IMR-90 (cell line): ENCODE measurements at regions of chr14 and their contacts with region 1.

Region 1: GRCh38 chr14:80055667-80056496 is 155.4 kb downstream of the DIO2 start:
- DNase-seq: peak; percentile 78
- ATAC-seq: peak; percentile 80
- H3K4me3 ChIP-seq: no peak overlapping the region
- H3K27ac ChIP-seq: no peak overlapping the region
- H3K4me1 ChIP-seq: no peaks in the 10 kb centered on the region; the same call in 1 of the 2 replicates
- H3K27me3 ChIP-seq: no peaks in the 10 kb centered on the region
- CTCF ChIP-seq: peak; percentile 87
- POLR2A ChIP-seq: no peak
- RAD21 ChIP-seq: peak; percentile 94

Region 2: DNA sequence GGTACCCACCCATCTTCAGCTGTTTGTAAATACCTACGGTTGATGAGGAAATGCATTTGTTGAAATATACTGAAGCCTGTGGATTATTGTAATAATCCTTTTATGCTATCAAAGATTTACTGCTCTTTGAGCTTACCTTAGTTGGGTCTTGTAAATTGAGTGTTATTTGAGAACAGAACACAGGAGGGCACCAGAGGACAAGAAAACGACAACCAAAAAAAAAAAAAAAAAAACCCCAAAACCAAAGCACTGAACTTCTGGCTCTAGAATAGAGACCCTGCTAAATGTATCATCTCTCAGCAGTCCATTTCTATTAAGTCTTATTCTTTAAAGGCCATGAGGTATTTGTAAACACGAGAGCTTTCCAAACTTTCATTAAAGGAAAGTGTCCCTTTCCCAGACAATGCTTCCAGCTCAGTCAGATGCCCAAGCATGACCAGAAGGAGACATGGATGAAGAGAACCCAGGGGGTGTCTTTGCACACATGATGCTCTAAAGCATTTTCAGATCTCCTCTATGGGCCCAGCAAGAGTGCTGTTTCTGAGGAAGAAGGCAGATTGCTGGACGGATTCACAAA is 1121.8 kb before region 1 on chr14:
- CTCF ChIA-PET with region 1: interaction called, 4 read pairs
- POLR2A ChIA-PET with region 1: no interaction called
- dilution Hi-C with region 1: no loop called
- in situ Hi-C with region 1: no loop called
- intact Hi-C with region 1: loop called (anchors 1 kb)
- DNase-seq: peak; percentile 49
- ATAC-seq: peak; percentile 60
- H3K4me3 ChIP-seq: no peak overlapping the region
- H3K27ac ChIP-seq: no peak overlapping the region
- H3K4me1 ChIP-seq: no peaks in the 10 kb centered on the region
- H3K27me3 ChIP-seq: peaks cover 2% of the 10 kb centered on the region; the same call in 1 of the 2 replicates
- CTCF ChIP-seq: peak; percentile 72
- POLR2A ChIP-seq: no peak
- RAD21 ChIP-seq: peak; percentile 86

Region 3: DNA sequence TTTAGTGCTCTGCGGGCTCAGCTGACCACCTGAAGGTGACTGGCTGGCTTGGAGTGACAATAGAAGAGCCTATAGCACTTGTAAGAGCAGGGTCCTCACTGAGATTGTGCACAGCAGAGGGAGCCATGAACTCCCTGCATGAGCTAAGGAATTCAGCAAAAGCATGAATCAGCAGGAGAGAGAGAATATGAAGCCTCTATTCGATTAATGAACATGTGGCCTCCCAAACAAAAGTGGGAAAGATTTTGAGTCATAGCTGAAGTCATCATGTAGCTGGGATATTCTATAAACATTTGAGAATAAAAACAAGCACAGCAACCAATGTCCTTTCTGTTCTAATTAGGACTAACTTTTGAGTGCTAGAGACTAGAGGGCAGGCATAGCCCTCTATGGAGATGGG is 471.2 kb before region 1 on chr14:
- CTCF ChIA-PET with region 1: no interaction called
- POLR2A ChIA-PET with region 1: no interaction called
- dilution Hi-C with region 1: no loop called
- in situ Hi-C with region 1: no loop called
- intact Hi-C with region 1: loop called (anchors 5 kb)
- DNase-seq: peak; percentile 98
- ATAC-seq: peak; percentile 79
- H3K4me3 ChIP-seq: no peak overlapping the region
- H3K27ac ChIP-seq: peak overlapping the region; percentile 85
- H3K4me1 ChIP-seq: peaks cover 14% of the 10 kb centered on the region
- H3K27me3 ChIP-seq: no peaks in the 10 kb centered on the region
- CTCF ChIP-seq: peak; percentile 53
- POLR2A ChIP-seq: no peak
- RAD21 ChIP-seq: peak; percentile 59

Region 4: GRCh38 chr14:80425686-80426085 is 369.8 kb after region 1 on chr14:
- CTCF ChIA-PET with region 1: no interaction called
- POLR2A ChIA-PET with region 1: no interaction called
- dilution Hi-C with region 1: no loop called
- in situ Hi-C with region 1: no loop called
- intact Hi-C with region 1: loop called (anchors 5 kb)
- DNase-seq: peak; percentile 100
- ATAC-seq: peak; percentile 92
- H3K4me3 ChIP-seq: no peak overlapping the region
- H3K27ac ChIP-seq: no peak overlapping the region; the same call in 1 of the 2 replicates
- H3K4me1 ChIP-seq: peaks cover 10% of the 10 kb centered on the region
- H3K27me3 ChIP-seq: no peaks in the 10 kb centered on the region
- CTCF ChIP-seq: no peak
- POLR2A ChIP-seq: no peak
- RAD21 ChIP-seq: no peak

Region 5: DNA sequence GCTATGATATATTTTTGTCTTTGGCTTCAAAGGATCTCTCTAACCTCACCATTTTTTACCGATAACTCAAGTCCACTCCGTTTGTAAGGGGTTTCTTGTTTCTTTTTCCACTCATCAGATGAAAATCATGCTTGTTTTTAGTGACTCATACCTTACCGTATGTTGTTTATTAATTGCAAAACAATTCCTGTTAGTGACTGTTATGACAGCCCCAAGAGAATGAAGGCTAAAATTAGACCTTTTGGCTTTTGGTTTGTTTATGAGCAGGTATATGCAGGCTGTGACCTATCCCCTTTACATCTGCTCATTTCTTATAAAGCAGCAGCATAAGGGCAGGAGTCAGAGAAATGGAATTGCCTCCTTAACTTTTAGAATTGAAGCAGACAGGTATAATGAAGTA is 565.8 kb after region 1 on chr14:
- CTCF ChIA-PET with region 1: no interaction called
- POLR2A ChIA-PET with region 1: no interaction called
- dilution Hi-C with region 1: no loop called
- in situ Hi-C with region 1: loop called (anchors 25 kb)
- intact Hi-C with region 1: no loop called
- DNase-seq: peak; percentile 89
- ATAC-seq: peak; percentile 33
- H3K4me3 ChIP-seq: no peak overlapping the region
- H3K27ac ChIP-seq: peak overlapping the region; percentile 13; the same call in 1 of the 2 replicates
- H3K4me1 ChIP-seq: peaks cover 5% of the 10 kb centered on the region
- H3K27me3 ChIP-seq: no peaks in the 10 kb centered on the region
- CTCF ChIP-seq: no peak
- POLR2A ChIP-seq: no peak
- RAD21 ChIP-seq: no peak

Region 6: DNA sequence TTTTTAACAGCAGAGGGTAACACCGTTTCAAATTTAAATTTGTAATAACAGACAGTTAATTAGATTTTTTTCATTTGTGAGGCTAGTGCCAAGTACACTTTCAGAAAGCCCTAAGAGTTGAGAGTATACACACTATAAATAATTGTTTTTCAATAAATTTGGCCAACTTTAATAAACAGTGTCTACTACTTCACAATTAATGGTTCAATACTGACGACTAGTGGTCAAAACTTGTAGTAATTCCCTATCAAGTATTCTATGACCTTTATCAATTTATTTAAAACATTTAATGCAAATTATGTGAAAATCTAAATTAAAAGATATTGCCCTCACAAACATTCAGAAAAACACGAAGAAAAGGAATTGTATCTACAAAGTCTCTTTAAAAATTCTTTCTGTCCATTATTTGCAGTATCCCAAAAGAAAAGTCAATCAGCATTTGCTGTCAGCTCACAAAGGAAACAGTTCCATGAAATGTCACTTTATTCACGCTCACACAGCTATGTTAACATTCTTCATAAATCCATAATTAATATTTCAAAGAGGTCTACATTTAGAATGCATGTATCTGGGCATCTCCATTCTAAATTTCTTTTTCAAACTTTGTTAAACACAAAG is 794.4 kb after region 1 on chr14:
- CTCF ChIA-PET with region 1: interaction called, 6 read pairs
- POLR2A ChIA-PET with region 1: no interaction called
- dilution Hi-C with region 1: no loop called
- in situ Hi-C with region 1: loop called (anchors 5 kb)
- intact Hi-C with region 1: loop called (anchors 1 kb)
- DNase-seq: peak; percentile 68
- ATAC-seq: peak; percentile 78
- H3K4me3 ChIP-seq: no peak overlapping the region
- H3K27ac ChIP-seq: no peak overlapping the region
- H3K4me1 ChIP-seq: peaks cover 2% of the 10 kb centered on the region; the same call in 1 of the 2 replicates
- H3K27me3 ChIP-seq: no peaks in the 10 kb centered on the region
- CTCF ChIP-seq: peak; percentile 75
- POLR2A ChIP-seq: no peak
- RAD21 ChIP-seq: peak; percentile 78